Cardiac septum (tissue), 1 donor: ENCODE measurements at regions of chr5 and their contacts with region 1.

Region 1: GRCh38 chr5:13987843-13988464 is 43.5 kb upstream of the DNAH5 start:
- DNase-seq: no peak

Region 2: GRCh38 chr5:13695076-13695712 is 292.8 kb before region 1 on chr5:
- intact Hi-C with region 1: no loop called
- DNase-seq: no peak

Region 3: DNA sequence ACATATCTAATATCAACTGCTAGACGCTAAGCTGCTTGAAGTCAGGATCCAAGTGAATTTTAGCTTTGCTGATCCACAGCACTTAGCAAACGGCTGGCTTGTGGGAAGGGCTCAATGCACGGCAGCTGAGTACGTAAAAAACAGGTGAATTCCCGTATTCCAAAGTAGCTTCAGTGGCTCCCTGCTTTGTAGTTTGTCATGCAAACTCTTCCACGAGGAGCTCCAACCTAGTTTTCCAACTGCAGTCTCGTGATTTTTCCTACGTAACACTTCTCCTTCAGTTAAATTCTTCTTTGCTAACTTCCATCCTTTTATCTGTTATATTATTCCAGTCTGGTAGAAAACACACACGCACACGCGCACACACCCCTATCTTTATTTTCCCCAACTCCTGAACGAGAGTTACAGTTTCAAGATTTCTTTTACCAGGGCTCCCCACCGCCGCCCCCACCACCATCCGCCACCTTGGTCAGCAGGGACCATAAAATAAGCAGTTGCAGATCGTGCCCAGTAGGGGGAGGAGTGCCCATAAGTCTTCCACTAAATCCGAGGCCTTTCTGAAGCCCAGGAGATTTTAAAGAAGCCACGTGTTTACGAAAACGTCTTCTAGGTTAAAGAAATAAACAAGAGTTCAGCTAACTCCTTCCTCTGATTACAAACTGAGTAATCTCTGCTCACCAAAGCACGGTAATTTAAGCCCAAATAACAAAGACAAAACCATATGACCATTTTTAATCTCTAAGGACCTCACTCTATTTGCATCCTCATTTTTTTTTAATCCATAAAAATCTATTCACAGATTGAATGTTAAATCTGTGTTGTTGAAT is 120.4 kb after region 1 on chr5:
- intact Hi-C with region 1: loop called (anchors 5 kb)
- DNase-seq: no peak

Region 4: GRCh38 chr5:14364576-14365472 is 376.9 kb after region 1 on chr5:
- intact Hi-C with region 1: loop called (anchors 5 kb)
- DNase-seq: no peak